ENCODE measurements at regions of chr3 and their contacts with region 1.

Region 1: GRCh38 chr3:183178629-183179549 is 16.4 kb upstream of the LAMP3 start:
- DNase-seq: peak; percentile 72
- H3K4me3 ChIP-seq: peak overlapping the region; percentile 45
- H3K27ac ChIP-seq: no peak overlapping the region
- H3K4me1 ChIP-seq: no peaks in the 10 kb centered on the region
- H3K27me3 ChIP-seq: peaks cover 2% of the 10 kb centered on the region
- CTCF ChIP-seq: peak; percentile 28; the same call in 1 of the 2 replicates

Region 2: DNA sequence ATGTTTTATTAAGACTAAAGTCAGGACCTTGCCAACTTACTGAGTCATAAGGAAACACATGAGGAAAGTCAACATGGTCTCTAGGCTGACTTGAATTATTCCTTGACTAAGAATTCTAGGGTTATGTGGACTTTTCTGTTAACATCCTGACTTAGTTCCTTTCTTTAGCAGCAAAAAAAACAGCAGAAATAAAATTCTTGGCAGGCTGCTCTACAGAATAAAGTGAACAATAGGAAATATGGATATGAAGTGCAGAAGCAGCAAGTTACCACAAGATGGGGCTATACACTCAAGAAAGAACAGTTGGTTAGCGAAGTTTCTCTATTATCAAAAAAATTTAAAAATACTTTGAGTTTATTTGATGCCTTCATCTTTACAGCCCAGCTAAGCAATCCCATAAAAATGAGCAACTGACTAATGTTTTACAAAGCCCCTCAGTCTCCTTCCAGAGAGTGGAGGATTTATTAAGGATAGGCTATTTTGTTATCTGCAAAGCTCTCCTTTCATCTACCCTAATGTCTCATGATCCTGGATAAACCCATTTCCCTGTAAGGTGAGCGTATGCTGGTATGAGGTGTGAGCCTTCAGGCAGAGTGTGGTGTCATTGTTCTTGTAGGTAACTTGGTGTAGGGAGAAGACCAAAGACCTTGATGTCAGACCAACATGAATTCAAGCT is 56.5 kb before region 1 on chr3:
- CTCF ChIA-PET with region 1: interaction called, 5 read pairs
- POLR2A ChIA-PET with region 1: no interaction called
- intact Hi-C with region 1: loop called (anchors 5 kb)
- DNase-seq: peak; percentile 69
- H3K4me3 ChIP-seq: no peak overlapping the region
- H3K27ac ChIP-seq: no peak overlapping the region
- H3K4me1 ChIP-seq: peaks cover 4% of the 10 kb centered on the region
- H3K27me3 ChIP-seq: peaks cover 3% of the 10 kb centered on the region
- CTCF ChIP-seq: peak; percentile 88

Region 3: GRCh38 chr3:183153210-183154068 is 25.4 kb before region 1 on chr3:
- CTCF ChIA-PET with region 1: no interaction called
- POLR2A ChIA-PET with region 1: no interaction called
- intact Hi-C with region 1: loop called (anchors 1 kb)
- DNase-seq: no peak
- H3K4me3 ChIP-seq: no peak overlapping the region
- H3K27ac ChIP-seq: no peak overlapping the region
- H3K4me1 ChIP-seq: no peaks in the 10 kb centered on the region
- H3K27me3 ChIP-seq: no peaks in the 10 kb centered on the region
- CTCF ChIP-seq: no peak

Region 4: DNA sequence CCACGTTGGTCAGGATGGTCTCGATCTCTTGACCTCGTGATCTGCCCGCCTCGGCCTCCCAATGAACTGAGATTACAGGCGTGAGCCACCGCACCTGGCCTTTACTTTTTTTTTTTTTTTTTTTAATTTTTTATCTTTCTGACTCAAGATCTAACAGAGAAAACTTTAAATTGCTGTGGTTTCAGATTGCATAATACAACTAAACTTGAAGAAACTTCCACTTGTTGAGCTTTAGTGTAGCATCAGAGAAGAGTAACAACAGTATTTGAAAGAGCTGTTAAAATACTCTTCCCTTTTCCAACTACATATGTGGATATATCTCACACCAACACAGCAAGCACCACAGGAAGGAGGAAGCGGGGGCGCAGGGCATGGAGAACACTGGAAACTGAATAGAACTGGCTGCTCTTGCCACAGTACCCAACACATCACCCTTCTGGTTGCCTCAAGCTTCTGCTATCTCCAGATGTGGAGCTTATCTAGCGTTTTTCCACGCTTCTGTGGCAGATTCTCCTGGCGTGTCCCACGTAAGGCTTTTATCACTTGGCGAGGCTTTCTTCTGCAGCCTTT is 601.1 kb after region 1 on chr3:
- CTCF ChIA-PET with region 1: no interaction called
- POLR2A ChIA-PET with region 1: no interaction called
- intact Hi-C with region 1: no loop called
- DNase-seq: no peak
- H3K4me3 ChIP-seq: no peak overlapping the region
- H3K27ac ChIP-seq: no peak overlapping the region
- H3K4me1 ChIP-seq: no peaks in the 10 kb centered on the region
- H3K27me3 ChIP-seq: no peaks in the 10 kb centered on the region
- CTCF ChIP-seq: no peak